Caco-2 (cell line): ENCODE measurements at regions of chr11 and their contacts with region 1.

Region 1: DNA sequence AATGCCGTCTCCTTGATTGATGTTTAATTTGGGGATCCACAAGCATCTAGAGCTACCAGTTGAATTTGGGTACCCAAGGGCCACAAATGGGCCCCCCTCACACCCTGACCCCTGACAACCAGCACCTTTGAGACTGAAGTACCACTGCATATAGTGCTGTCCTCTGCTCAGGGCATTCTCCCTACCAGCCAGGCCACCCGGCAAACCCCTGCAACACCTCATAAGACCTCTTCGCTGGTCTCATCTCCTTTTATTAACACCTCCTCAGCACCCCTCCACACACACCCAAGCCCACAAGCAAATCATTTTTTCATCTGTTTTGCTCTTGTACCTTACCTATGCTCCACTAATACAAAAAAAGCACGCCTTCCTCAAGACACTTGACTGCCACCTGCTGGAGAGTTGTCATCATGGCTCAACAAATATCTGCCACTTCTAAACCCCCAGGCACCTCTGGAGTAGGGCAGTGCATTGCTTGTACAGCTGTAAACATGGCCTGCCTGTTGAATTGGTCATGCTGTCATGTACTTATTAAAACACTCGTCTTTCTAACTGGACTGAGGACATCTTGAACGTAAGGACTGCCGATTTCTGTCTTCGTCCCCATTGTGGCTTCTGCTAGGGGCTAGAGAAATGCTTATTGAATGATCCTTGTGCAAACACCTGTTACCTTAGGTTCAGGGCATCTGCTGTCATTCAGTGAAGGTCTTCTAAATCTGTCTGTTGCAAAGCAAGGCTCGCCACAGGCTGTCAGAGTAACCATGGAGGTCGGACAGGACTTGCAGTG is 66.5 kb downstream of the BMAL1 start:
- DNase-seq: peak; percentile 76 to 80
- H3K4me3 ChIP-seq: no peak overlapping the region
- H3K4me3 Mint-ChIP-seq: no peak overlapping the region
- H3K27ac Mint-ChIP-seq: no peak overlapping the region
- H3K4me1 ChIP-seq: no peaks in the 10 kb centered on the region
- H3K4me1 Mint-ChIP-seq: peaks cover 12% of the 10 kb centered on the region
- H3K27me3 ChIP-seq: no peaks in the 10 kb centered on the region
- H3K27me3 Mint-ChIP-seq: no peaks in the 10 kb centered on the region
- CTCF ChIP-seq: peak; percentile 81 to 82

Region 2: DNA sequence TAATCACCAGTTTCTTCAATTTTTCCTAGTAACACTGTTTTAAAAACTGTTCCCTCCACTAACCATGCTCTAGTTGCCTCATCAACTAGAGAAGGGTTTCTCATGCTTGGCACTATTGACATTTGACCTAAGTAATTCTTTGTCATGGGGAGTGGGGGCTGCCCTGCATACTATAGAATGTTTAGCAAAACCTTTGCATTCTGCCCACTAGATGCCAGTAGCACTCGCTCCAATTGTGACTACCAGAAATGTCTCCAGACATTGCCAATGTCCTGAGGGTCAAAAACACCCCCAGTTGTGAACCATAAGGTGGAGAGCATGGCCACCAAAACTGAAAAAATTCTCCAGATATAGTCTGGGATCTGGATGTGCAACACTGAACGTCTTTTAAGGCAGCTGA is 94.1 kb before region 1 on chr11:
- CTCF ChIA-PET with region 1: interaction called, 3 read pairs
- POLR2A ChIA-PET with region 1: no interaction called
- intact Hi-C with region 1: loop called (anchors 1 kb)
- DNase-seq: peak in 1 of 2 experiments; percentile 17
- H3K4me3 ChIP-seq: no peak overlapping the region
- H3K4me3 Mint-ChIP-seq: no peak overlapping the region
- H3K27ac Mint-ChIP-seq: no peak overlapping the region
- H3K4me1 ChIP-seq: no peaks in the 10 kb centered on the region
- H3K4me1 Mint-ChIP-seq: no peaks in the 10 kb centered on the region
- H3K27me3 ChIP-seq: no peaks in the 10 kb centered on the region
- H3K27me3 Mint-ChIP-seq: peaks cover 9% of the 10 kb centered on the region
- CTCF ChIP-seq: no peak

Region 3: DNA sequence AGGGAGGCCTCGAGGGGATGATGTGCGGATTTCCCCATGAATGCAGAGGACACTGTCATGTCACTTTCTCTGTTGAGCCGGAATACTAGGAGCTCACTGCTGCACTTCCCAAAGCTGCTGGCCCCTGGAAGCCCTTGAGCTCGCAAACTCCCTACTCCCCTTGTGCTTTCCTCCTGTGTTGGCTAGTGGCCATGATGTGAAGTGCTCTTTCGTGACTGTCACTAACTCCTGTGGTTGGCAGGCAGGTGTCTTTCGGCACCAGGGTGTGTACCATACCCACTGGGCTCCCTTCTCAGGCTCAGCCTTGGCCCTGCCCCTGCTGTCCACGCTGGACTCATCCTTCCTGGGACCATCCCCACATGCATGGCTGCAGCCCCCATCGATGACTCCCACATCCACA is 32.7 kb after region 1 on chr11:
- CTCF ChIA-PET with region 1: no interaction called
- POLR2A ChIA-PET with region 1: no interaction called
- intact Hi-C with region 1: no loop called
- DNase-seq: no peak
- H3K4me3 ChIP-seq: no peak overlapping the region
- H3K4me3 Mint-ChIP-seq: no peak overlapping the region
- H3K27ac Mint-ChIP-seq: no peak overlapping the region
- H3K4me1 ChIP-seq: no peaks in the 10 kb centered on the region
- H3K4me1 Mint-ChIP-seq: no peaks in the 10 kb centered on the region
- H3K27me3 ChIP-seq: no peaks in the 10 kb centered on the region
- H3K27me3 Mint-ChIP-seq: no peaks in the 10 kb centered on the region
- CTCF ChIP-seq: no peak

Region 4: GRCh38 chr11:13883042-13883441 is 538.9 kb after region 1 on chr11:
- CTCF ChIA-PET with region 1: no interaction called
- POLR2A ChIA-PET with region 1: no interaction called
- intact Hi-C with region 1: no loop called
- DNase-seq: no peak
- H3K4me3 ChIP-seq: no peak overlapping the region
- H3K4me3 Mint-ChIP-seq: no peak overlapping the region
- H3K27ac Mint-ChIP-seq: no peak overlapping the region
- H3K4me1 ChIP-seq: no peaks in the 10 kb centered on the region
- H3K4me1 Mint-ChIP-seq: peaks cover 6% of the 10 kb centered on the region
- H3K27me3 ChIP-seq: no peaks in the 10 kb centered on the region
- H3K27me3 Mint-ChIP-seq: peaks cover 10% of the 10 kb centered on the region
- CTCF ChIP-seq: no peak